Calu3 (cell line): ENCODE measurements at regions of chr20 and their contacts with region 1.

Region 1: GRCh38 chr20:9407805-9408421 is 106.5 kb upstream of the LAMP5 start:
- DNase-seq: peak; percentile 62
- H3K4me3 Mint-ChIP-seq: no peak overlapping the region
- H3K27ac Mint-ChIP-seq: no peak overlapping the region
- H3K4me1 Mint-ChIP-seq: no peaks in the 10 kb centered on the region
- H3K27me3 Mint-ChIP-seq: no peaks in the 10 kb centered on the region
- CTCF ChIP-seq: peak; percentile 70

Region 2: GRCh38 chr20:7571521-7572055 is 1836.3 kb before region 1 on chr20:
- CTCF ChIA-PET with region 1: no interaction called
- intact Hi-C with region 1: no loop called
- DNase-seq: no peak
- H3K4me3 Mint-ChIP-seq: no peak overlapping the region
- H3K27ac Mint-ChIP-seq: no peak overlapping the region
- H3K4me1 Mint-ChIP-seq: no peaks in the 10 kb centered on the region
- H3K27me3 Mint-ChIP-seq: no peaks in the 10 kb centered on the region
- CTCF ChIP-seq: no peak

Region 3: DNA sequence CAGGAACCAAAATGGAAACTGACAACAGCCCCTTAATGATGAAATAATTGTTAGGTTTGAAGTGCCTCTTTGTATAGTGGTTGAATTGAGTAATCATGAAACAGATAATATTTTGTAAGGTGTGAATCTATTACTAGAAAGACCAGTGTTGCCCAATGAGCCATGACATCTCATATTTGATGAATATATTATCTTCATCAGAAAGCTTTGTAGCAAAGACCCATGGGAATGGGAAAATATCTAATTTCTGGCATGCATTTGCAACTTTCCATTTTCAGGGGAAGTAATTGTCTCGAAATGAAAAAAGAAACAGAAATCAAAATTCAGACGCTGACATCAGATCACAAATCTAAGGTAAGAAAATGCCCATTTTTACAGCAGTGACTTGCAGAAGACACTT is 49.2 kb after region 1 on chr20:
- CTCF ChIA-PET with region 1: no interaction called
- intact Hi-C with region 1: loop called (anchors 2 kb)
- DNase-seq: no peak
- H3K4me3 Mint-ChIP-seq: no peak overlapping the region
- H3K27ac Mint-ChIP-seq: no peak overlapping the region
- H3K4me1 Mint-ChIP-seq: no peaks in the 10 kb centered on the region
- H3K27me3 Mint-ChIP-seq: no peaks in the 10 kb centered on the region
- CTCF ChIP-seq: no peak